MCF 10A (cell line): ENCODE measurements at regions of chrX and their contacts with region 1.

Region 1: DNA sequence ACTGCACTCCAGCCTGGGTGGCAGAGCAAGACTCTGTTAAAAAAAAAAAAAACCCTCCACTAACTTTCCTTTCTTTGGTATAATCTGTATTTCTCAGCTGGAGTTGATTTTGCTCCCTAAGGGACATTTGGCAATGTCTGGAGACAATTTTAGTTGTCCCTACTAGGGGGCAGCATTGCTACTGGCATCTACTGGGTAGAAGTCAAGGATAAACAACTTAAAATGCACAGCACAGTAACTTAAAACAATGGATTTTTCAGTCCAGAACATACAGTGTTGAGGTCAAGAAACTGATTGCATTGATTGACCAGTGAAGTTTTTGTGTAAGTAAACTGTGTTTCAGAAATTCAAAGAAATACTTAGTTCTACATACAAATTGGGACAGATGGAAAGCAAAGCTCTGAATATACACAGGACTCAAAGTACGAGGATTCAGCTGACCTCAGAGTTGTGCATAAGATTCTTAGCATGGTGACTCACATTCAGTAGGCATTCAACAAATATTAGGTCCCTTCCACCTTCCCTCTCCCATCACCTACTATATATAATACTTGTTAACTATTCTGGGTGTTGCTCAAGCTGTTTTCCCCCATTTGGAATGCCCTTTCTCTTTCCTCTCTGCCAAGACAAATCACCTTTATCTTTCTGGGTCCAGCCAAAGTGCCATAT is 8.8 kb downstream of the DDX53 start:
- DNase-seq: peak; percentile 54
- H3K4me3 Mint-ChIP-seq: no peak overlapping the region
- H3K27ac Mint-ChIP-seq: no peak overlapping the region
- H3K4me1 Mint-ChIP-seq: peaks cover 8% of the 10 kb centered on the region
- H3K27me3 Mint-ChIP-seq: peaks cover 28% of the 10 kb centered on the region
- CTCF ChIP-seq: peak; percentile 37

Region 2: DNA sequence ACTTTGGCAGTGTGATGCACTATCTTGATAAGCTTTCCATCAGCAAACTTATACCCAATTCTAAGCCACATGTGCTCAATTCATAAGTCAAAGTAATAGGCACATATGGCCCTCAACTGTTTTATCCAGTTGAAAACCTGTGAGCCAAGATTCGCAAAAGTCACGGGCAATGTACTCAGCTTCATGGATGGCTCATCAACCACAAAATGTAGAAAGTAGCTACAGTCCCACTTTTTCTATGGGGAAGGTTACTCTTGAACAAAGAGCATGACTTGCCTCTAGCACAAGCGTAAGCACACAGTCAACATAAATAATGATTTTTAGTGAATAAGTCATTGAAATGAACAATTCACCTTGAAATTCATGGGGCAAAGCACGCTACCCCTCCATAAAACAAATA is 33.9 kb before region 1 on chrX:
- CTCF ChIA-PET with region 1: no interaction called
- POLR2A ChIA-PET with region 1: no interaction called
- intact Hi-C with region 1: no loop called
- DNase-seq: no peak
- H3K4me3 Mint-ChIP-seq: no peak overlapping the region
- H3K27ac Mint-ChIP-seq: no peak overlapping the region
- H3K4me1 Mint-ChIP-seq: no peaks in the 10 kb centered on the region
- H3K27me3 Mint-ChIP-seq: peaks cover 51% of the 10 kb centered on the region
- CTCF ChIP-seq: no peak

Region 3: DNA sequence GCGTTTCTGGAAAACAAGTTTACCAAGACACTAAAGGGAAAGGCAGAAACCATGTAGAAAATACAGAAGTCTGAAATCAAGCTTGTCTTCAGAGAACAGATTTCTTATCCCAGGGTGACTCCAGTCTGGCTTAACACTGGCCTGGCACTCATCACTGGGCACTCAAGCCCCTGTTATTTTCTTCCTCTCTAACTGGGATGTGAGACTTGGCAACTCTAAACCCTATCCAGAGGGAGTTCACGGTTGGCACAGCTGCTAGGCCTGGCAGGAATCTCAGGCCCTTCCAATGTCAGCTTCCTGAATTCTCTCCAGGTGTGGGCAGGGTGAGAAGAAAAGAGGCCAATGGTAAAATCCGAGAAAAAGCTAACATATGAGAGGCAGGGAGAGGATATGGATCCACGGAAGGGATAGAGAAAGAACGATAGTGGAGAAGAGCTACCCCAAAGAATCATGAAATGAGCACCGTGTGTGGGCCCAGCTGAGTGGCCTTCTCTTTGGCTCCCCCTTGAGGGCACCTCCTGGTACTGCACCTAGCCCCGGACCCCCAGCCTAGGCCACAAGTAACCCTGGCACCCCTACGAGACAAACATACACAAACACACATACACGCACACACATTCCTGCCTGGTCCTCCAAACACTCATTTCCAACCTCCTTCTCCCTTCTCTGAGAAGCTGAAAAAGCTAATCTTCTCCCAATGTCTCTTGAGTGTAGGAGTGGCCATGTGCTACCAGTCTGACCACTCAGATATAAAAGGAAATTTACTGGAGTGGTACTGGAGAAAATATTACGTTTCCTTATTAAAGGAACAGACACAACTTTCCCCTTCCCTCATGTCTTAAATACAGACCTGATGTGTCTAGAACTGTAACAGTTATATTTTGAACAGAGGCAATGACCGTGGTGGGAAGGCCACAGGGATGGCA is 309.5 kb after region 1 on chrX:
- CTCF ChIA-PET with region 1: interaction called, 3 read pairs
- POLR2A ChIA-PET with region 1: no interaction called
- intact Hi-C with region 1: loop called (anchors 1 kb)
- DNase-seq: peak; percentile 44
- H3K4me3 Mint-ChIP-seq: no peak overlapping the region
- H3K27ac Mint-ChIP-seq: no peak overlapping the region
- H3K4me1 Mint-ChIP-seq: no peaks in the 10 kb centered on the region
- H3K27me3 Mint-ChIP-seq: peaks cover 70% of the 10 kb centered on the region
- CTCF ChIP-seq: peak; percentile 94